HEK293 (cell line): ENCODE measurements at regions of chr20 and their contacts with region 1.

Region 1: DNA sequence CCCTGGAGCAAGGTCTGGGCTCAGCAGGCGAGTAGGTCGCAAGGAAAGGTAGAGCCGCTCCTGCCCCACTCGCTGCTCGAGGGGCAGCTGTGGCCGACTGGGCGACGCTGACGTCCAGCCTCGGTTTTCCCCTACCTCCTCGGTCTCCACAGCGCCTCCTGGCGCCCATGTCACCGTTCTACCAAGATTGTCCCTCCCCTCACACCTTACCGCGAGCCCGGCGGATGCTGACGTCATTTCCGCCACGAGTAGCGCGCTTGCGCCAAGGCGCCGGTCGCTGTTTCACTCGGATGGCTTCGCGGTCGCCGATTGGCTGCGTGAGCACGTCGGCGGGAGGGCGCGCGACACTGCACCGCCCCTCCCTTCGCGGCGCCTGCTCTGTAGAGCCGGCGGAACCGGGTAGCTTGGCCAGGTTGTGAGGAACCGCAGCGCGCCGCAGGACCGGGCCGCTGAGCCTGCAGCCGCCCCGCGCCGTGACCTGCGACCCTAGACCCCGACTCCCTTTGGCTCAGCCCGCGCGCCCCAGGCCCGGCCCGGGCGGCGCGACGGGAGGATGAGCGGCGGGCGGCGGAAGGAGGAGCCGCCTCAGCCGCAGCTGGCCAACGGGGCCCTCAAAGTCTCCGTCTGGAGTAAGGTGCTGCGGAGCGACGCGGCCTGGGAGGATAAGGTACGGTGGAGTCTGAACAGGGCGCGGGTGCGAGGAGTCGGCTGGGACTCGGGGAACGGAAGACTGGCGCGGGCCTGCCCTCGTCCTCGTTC is at the start of gene RAB5IF:
- H3K4me3 ChIP-seq: peak within 1 kb of the TSS; percentile 93
- H3K27ac ChIP-seq: peak within 1 kb of the TSS; percentile 85
- H3K4me1 ChIP-seq: no peaks in the 10 kb centered on the region
- CTCF ChIP-seq: peak; percentile 100

Region 2: DNA sequence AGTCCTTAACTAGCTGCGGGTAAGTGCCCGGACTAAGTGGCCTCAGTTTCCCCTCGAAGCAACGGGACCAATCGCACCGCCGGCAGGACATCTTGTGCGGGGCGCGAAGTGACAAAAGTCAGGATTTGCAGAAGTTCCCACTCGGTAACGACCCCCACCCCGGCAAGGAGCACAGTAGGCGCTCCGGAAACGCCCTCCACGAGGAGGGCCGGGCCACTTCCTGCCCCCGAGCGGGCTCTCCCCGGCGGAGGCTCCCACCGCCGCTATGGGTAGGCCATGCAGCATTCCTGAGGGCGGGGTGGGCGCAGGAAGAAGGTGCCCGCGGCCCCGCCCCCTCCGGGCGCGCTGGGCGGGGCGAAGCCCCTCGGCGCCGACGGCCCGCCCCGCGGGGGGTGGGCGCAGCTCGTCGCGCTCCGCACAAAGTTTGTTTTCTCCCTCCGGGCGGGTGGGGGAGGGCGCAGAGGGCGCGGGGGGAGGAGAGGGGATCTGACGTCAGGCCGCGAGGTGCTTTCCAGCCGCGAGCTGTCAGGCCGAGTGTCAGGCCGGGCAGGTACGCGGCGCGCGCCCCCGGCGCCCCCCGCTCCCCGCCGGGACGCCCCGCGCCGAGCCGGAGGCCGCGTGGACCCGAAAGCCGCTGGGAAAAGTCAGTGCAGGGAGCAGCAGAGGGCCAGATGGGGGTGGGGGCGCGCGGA is 32.3 kb before region 1 on chr20 and contains the start of gene TGIF2:
- CTCF ChIA-PET with region 1: interaction called, 18 read pairs
- POLR2A ChIA-PET with region 1: interaction called, 26 read pairs
- H3K4me3 ChIP-seq: peak within 1 kb of the TSS; percentile 70
- H3K27ac ChIP-seq: peak within 1 kb of the TSS; percentile 94
- H3K4me1 ChIP-seq: peaks cover 4% of the 10 kb centered on the region; the same call in 1 of the 2 replicates
- CTCF ChIP-seq: no peak

Region 3: DNA sequence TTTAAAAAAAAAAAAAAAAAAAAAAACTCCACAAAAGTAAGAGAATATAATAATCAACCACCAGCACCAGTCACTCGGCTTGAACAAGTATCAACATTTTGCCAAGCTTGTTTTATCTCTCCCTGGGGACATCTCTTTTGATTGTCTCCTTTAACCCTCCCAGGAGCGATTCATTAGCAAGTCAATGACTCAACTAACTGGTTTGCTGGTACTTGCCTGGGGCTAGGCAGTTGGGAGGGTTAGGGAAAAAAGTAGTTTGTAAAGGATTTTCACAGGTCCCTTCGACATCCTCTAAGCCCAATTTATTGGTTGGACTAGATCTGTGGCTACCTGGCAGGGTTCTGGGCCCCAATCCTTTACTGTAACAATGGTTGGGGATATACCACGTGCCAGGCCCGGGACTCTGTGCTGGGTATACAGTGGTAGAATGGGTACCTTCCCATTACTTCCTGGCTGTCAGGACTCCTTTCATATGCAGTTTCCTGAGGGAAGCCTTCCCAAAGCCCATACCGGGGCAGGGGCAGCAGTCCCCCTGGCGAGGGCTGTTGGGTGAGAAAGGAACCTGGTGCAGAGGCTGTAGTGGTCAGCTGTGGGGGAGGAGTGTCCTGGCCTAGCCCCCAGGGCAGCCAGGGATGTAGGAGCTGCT is 20.0 kb before region 1 on chr20:
- CTCF ChIA-PET with region 1: interaction called, 14 read pairs
- POLR2A ChIA-PET with region 1: interaction called, 12 read pairs
- H3K4me3 ChIP-seq: no peak overlapping the region
- H3K27ac ChIP-seq: peak overlapping the region; percentile 36; the same call in 1 of the 2 replicates
- H3K4me1 ChIP-seq: peaks cover 4% of the 10 kb centered on the region
- CTCF ChIP-seq: no peak

Region 4: DNA sequence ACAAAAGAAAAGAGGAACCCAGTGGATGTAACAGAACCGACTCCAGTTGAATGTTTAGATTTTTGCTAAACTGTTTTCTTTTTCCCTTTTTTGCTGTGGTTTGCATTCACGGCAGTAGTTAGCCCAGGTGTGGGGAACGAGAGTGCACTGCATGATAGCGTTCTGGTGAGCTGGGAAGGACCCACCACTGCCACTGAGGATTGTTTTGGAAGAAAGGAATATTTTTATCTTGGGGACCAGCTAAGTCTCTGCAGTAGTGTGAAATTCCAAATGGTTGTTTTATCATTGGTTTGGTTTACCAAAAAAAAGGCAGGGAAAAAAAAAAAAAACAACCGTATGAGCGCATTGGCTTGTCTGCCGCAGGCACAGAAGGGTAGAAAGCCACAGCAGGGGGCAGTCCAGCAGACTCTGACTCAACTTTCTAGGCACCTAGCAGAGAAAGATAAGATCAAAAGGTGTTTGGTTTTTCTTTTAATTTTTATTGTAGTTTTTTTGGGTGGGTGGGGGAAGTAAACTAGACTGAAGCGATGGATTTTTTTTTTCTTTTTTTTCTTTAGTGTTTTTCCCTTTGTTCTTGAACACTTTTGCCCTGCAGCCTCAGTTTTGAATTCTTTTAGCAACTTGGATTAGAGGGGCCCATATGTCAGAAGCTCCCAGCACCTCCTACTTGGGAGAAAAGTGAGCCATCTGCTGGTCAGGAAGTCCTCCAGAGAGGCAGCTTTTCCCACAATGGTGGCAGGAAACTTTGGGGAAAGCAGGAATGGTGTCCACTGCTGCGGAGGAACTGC is 13.5 kb before region 1 on chr20:
- CTCF ChIA-PET with region 1: interaction called, 14 read pairs
- POLR2A ChIA-PET with region 1: interaction called, 12 read pairs
- H3K4me3 ChIP-seq: no peak overlapping the region
- H3K27ac ChIP-seq: no peak overlapping the region
- H3K4me1 ChIP-seq: peaks cover 3% of the 10 kb centered on the region; the same call in 1 of the 2 replicates
- CTCF ChIP-seq: peak; percentile 56